Calu3 (cell line): ENCODE measurements at regions of chr11 and their contacts with region 1.

Region 1: DNA sequence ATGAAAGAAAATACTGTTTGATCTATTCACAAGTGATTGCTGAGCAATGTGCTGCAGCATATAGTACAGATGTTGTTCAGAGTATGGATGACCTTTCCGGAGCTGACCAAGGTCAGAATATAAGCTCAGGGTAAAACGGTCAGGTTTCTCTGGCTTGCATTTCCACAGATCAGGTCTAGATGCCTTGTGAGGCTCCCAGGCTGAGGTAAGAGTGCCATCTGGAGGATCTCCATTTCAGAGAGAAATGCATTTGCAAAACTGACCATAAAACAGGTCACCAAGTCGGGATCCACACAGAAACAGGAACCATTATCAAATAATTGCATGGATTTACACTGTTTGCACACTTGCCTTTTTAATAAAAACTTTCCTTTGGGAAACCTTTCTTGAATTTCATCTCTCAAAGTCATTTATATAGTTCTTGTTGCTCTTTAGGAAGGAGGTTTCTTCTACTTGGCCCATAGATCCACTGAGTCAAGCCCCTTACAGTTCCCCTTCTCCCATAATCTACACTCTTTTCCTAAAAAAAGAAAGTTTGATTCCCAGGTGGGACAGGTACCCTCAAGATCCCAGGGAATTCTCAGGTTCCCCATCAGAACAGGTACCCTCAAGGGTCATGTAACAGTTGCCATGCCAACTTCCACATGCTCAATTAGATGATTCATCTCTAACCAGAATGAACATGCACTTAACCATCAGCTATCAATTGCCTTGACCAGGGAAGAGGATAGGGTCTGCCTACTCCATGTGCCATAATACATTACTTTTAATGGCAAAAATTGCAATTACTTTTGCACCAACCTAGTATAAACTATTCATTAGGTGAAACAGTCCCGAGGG is 25.0 kb upstream of the TMPRSS5 start:
- DNase-seq: peak; percentile 51
- H3K4me3 Mint-ChIP-seq: no peak overlapping the region
- H3K27ac Mint-ChIP-seq: no peak overlapping the region
- H3K4me1 Mint-ChIP-seq: peaks cover 20% of the 10 kb centered on the region
- H3K27me3 Mint-ChIP-seq: no peaks in the 10 kb centered on the region
- CTCF ChIP-seq: no peak

Region 2: GRCh38 chr11:113305440-113306336 is 425.4 kb before region 1 on chr11:
- CTCF ChIA-PET with region 1: no interaction called
- intact Hi-C with region 1: loop called (anchors 1 kb)
- DNase-seq: peak; percentile 76
- H3K4me3 Mint-ChIP-seq: no peak overlapping the region
- H3K27ac Mint-ChIP-seq: no peak overlapping the region
- H3K4me1 Mint-ChIP-seq: no peaks in the 10 kb centered on the region
- H3K27me3 Mint-ChIP-seq: peaks cover 18% of the 10 kb centered on the region
- CTCF ChIP-seq: peak; percentile 72

Region 3: GRCh38 chr11:113532697-113533424 is 198.2 kb before region 1 on chr11:
- CTCF ChIA-PET with region 1: no interaction called
- intact Hi-C with region 1: loop called (anchors 5 kb)
- DNase-seq: peak; percentile 73
- H3K4me3 Mint-ChIP-seq: no peak overlapping the region
- H3K27ac Mint-ChIP-seq: no peak overlapping the region
- H3K4me1 Mint-ChIP-seq: no peaks in the 10 kb centered on the region
- H3K27me3 Mint-ChIP-seq: no peaks in the 10 kb centered on the region
- CTCF ChIP-seq: peak; percentile 40

Region 4: DNA sequence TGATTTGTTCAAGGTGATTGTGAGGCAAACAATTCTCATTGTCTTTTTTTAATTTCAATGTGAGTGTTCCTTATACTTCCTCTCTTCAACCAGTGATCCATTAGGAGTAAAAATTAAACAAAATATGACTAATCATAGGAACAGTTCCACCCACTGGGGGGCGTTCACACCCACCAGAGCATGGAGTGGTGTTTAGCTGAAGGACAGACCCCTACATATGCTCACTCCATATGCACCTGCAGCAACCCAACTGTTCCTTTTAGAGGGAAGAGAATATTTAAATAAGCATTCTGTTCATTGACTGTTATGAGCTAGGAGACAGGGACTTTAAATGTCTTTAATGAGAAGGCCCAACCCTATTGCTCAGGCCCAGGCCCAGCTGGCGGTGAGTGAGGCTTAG is 177.2 kb before region 1 on chr11:
- CTCF ChIA-PET with region 1: no interaction called
- intact Hi-C with region 1: loop called (anchors 1 kb)
- DNase-seq: no peak
- H3K4me3 Mint-ChIP-seq: no peak overlapping the region
- H3K27ac Mint-ChIP-seq: no peak overlapping the region
- H3K4me1 Mint-ChIP-seq: no peaks in the 10 kb centered on the region
- H3K27me3 Mint-ChIP-seq: no peaks in the 10 kb centered on the region
- CTCF ChIP-seq: no peak

Region 5: DNA sequence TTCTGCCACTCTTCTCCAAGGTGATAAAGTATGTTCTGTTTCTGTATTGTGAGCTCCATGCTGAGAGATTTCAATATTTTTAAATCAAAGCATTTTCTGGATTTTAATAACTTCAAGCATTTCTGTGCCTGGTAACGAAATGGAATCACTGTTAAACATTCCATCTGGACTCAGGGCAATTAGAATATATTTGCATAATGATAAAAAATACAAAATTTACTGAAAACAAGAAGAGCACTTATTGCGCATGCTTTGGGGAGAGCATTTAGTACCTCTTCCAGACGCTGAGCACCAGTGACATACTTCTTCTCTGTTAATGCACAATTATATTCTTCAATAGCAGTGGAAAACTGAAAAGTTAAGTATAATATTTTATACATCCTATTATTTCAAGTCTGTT is 29.1 kb after region 1 on chr11:
- CTCF ChIA-PET with region 1: interaction called, 12 read pairs
- intact Hi-C with region 1: no loop called
- DNase-seq: no peak
- H3K4me3 Mint-ChIP-seq: no peak overlapping the region
- H3K27ac Mint-ChIP-seq: no peak overlapping the region
- H3K4me1 Mint-ChIP-seq: no peaks in the 10 kb centered on the region
- H3K27me3 Mint-ChIP-seq: no peaks in the 10 kb centered on the region
- CTCF ChIP-seq: no peak

Region 6: DNA sequence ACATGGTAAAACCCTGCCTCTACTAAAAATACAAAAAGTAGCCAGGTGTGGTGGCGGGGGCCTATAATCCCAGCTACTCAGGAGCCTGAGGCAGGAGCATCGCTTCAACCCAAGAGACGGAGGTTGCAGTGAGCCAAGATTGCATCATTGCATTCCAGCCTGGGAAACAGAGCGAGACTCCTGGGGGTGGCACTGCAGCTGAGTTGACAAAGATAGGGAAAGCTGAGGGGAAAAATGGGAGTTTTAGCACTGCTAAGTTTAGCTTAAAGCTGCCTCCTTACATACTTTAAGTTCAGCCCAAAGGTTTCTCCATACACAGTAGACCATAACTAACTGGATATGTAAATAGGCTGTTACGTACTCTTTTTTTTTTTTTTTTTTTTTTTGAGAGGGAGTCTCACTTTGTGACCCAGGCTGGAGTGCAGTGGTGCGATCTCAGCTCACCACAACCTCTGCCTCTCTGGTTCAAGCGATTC is 153.3 kb after region 1 on chr11:
- CTCF ChIA-PET with region 1: no interaction called
- intact Hi-C with region 1: no loop called
- DNase-seq: no peak
- H3K4me3 Mint-ChIP-seq: no peak overlapping the region
- H3K27ac Mint-ChIP-seq: no peak overlapping the region
- H3K4me1 Mint-ChIP-seq: no peaks in the 10 kb centered on the region
- H3K27me3 Mint-ChIP-seq: no peaks in the 10 kb centered on the region
- CTCF ChIP-seq: no peak